OCI-LY7 (cell line): ENCODE measurements at regions of chr2 and their contacts with region 1.

Region 1: GRCh38 chr2:121076885-121077549 is 208.0 kb downstream of the TFCP2L1 start:
- DNase-seq: peak; percentile 63
- H3K4me3 ChIP-seq: no peak overlapping the region
- H3K27ac ChIP-seq: no peak overlapping the region
- H3K4me1 ChIP-seq: no peaks in the 10 kb centered on the region
- CTCF ChIP-seq: peak; percentile 91

Region 2: DNA sequence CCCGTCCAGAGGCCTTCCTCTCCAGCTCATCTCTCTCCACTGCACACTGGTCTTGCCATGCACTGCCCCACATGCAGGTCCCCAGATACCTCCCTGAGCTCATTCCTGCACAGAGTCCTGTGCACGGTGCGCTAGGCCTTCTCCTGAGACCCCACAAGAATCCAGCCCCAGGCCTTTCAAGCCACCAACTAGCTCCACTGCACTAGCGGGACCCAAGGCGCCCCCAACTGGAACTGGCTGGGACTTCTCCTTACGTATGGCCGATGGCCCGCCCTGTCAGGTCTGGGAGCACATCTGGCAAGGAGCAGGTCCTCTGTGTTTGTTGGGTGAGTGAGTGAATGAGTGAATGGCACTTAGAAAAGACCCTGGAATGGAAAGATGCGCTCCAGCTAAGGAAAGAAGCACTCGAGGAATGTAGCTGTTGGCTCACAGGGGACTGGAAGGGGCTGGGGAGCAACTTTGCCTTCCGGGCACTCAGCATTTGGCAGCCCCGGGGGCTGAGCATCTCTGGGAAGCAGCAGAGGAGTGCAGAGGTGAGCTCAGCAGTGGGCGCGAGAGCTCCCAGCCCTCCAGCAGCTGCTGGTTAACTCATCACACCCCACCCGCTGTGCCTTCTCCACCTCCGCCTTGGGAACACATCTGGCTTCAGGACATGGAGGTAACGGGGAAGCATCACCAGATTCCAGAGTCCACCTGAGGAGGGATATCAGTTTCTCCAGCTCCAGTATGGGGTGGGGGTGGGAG is 118.2 kb before region 1 on chr2:
- CTCF ChIA-PET with region 1: interaction called, 3 read pairs
- POLR2A ChIA-PET with region 1: no interaction called
- intact Hi-C with region 1: loop called (anchors 10 kb)
- DNase-seq: peak; percentile 16
- H3K4me3 ChIP-seq: no peak overlapping the region
- H3K27ac ChIP-seq: no peak overlapping the region
- H3K4me1 ChIP-seq: peaks cover 2% of the 10 kb centered on the region
- CTCF ChIP-seq: peak; percentile 58

Region 3: GRCh38 chr2:121052521-121052920 is 24.5 kb before region 1 on chr2:
- CTCF ChIA-PET with region 1: no interaction called
- POLR2A ChIA-PET with region 1: no interaction called
- intact Hi-C with region 1: no loop called
- DNase-seq: peak; percentile 75
- H3K4me3 ChIP-seq: no peak overlapping the region
- H3K27ac ChIP-seq: peak overlapping the region; percentile 43
- H3K4me1 ChIP-seq: peaks cover 18% of the 10 kb centered on the region
- CTCF ChIP-seq: no peak

Region 4: DNA sequence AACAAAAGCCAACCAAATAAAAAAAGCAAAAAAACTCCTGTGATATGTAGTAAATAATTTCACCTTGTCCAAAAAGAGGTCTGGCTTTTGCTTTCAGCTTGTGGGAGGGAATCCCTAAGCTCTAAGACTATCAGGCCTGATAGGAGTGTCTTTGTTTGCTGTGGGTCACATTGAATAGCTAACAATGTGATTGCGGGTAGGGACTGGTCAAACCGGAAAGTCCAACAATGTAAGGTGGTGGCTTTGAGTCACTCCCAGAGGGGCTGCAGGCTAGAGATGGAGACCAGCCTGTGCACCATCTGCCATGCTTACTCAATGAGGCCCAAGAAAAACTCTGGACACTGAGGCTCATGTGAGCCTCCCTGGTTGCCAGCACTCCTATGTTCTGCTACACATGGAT is 15.1 kb after region 1 on chr2:
- CTCF ChIA-PET with region 1: no interaction called
- POLR2A ChIA-PET with region 1: no interaction called
- intact Hi-C with region 1: no loop called
- DNase-seq: no peak
- H3K4me3 ChIP-seq: no peak overlapping the region
- H3K27ac ChIP-seq: no peak overlapping the region
- H3K4me1 ChIP-seq: no peaks in the 10 kb centered on the region
- CTCF ChIP-seq: no peak

Region 5: GRCh38 chr2:121329786-121330185 is 252.8 kb after region 1 on chr2:
- CTCF ChIA-PET with region 1: no interaction called
- POLR2A ChIA-PET with region 1: no interaction called
- intact Hi-C with region 1: loop called (anchors 10 kb)
- DNase-seq: no peak
- H3K4me3 ChIP-seq: no peak overlapping the region
- H3K27ac ChIP-seq: no peak overlapping the region
- H3K4me1 ChIP-seq: no peaks in the 10 kb centered on the region
- CTCF ChIP-seq: no peak

Region 6: DNA sequence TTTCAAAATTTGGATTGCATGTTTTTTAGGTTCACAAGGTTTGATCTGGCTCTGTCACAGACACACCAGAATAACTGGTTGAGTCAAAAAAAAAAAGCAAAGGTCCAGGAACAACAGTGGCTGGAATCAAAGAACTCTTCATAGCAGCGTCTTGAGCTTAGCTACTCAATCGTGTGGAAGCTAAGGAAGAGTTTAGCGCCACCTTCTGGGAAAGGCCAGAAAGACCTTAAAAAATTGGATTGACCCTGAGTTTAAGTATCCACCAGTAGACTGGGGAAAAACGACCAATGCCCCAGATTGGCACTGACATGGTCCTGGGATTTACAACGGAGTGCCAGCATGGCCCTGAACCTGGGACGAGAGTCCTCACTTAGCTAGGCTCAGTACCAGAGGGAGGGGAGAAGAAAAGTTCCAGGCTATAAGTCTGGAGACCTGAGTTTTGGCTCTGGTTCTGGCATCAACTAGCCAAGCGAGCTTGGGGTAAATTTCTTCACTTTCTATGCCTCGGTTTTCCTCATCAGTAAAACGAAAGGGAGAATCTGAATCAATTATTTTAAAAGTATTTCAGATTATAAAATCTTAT is 279.1 kb after region 1 on chr2:
- CTCF ChIA-PET with region 1: no interaction called
- POLR2A ChIA-PET with region 1: no interaction called
- intact Hi-C with region 1: loop called (anchors 10 kb)
- DNase-seq: peak; percentile 56
- H3K4me3 ChIP-seq: no peak overlapping the region
- H3K27ac ChIP-seq: no peak overlapping the region
- H3K4me1 ChIP-seq: no peaks in the 10 kb centered on the region
- CTCF ChIP-seq: peak; percentile 86